IMR-90 (cell line): ENCODE measurements at regions of chr3 and their contacts with region 1.

Region 1: GRCh38 chr3:30613133-30613825 is 6.9 kb downstream of the TGFBR2 start:
- DNase-seq: no peak
- ATAC-seq: no peak
- H3K4me3 ChIP-seq: no peak overlapping the region
- H3K27ac ChIP-seq: no peak overlapping the region
- H3K4me1 ChIP-seq: peaks cover 22% of the 10 kb centered on the region
- H3K27me3 ChIP-seq: no peaks in the 10 kb centered on the region
- CTCF ChIP-seq: no peak
- POLR2A ChIP-seq: no peak
- RAD21 ChIP-seq: no peak

Region 2: GRCh38 chr3:30567139-30567753 is 46.0 kb before region 1 on chr3:
- CTCF ChIA-PET with region 1: no interaction called
- POLR2A ChIA-PET with region 1: no interaction called
- dilution Hi-C with region 1: no loop called
- in situ Hi-C with region 1: no loop called
- intact Hi-C with region 1: no loop called
- DNase-seq: no peak
- ATAC-seq: no peak
- H3K4me3 ChIP-seq: no peak overlapping the region
- H3K27ac ChIP-seq: no peak overlapping the region
- H3K4me1 ChIP-seq: no peaks in the 10 kb centered on the region
- H3K27me3 ChIP-seq: no peaks in the 10 kb centered on the region
- CTCF ChIP-seq: no peak
- POLR2A ChIP-seq: no peak
- RAD21 ChIP-seq: no peak

Region 3: GRCh38 chr3:30658328-30659052 is 45.2 kb after region 1 on chr3:
- CTCF ChIA-PET with region 1: interaction called, 10 read pairs
- POLR2A ChIA-PET with region 1: no interaction called
- dilution Hi-C with region 1: no loop called
- in situ Hi-C with region 1: no loop called
- intact Hi-C with region 1: no loop called
- DNase-seq: peak; percentile 79
- ATAC-seq: peak; percentile 45
- H3K4me3 ChIP-seq: peak overlapping the region; percentile 11; the same call in 1 of the 2 replicates
- H3K27ac ChIP-seq: peak overlapping the region; percentile 93
- H3K4me1 ChIP-seq: peaks cover 29% of the 10 kb centered on the region
- H3K27me3 ChIP-seq: no peaks in the 10 kb centered on the region
- CTCF ChIP-seq: no peak
- POLR2A ChIP-seq: no peak
- RAD21 ChIP-seq: no peak

Region 4: DNA sequence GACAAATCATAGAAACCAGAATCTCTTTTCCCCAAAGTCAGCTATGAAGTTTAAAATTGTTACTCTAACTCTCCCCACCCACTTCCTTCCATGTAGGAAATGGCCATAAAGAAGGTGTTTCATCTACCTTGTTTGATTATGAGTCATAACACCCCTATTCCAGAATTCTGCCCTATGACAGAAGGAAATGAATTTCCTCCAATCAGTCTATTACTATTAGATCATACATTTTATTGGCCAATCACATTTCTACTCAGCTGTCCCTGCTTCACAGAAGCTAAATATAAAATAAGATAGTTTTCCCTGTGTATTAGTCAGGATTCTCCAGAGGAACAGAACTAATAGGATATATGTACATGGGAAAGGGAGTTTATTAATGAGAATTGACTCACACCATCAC is 95.2 kb after region 1 on chr3:
- CTCF ChIA-PET with region 1: no interaction called
- POLR2A ChIA-PET with region 1: interaction called, 10 read pairs
- dilution Hi-C with region 1: no loop called
- in situ Hi-C with region 1: no loop called
- intact Hi-C with region 1: no loop called
- DNase-seq: no peak
- ATAC-seq: no peak
- H3K4me3 ChIP-seq: no peak overlapping the region
- H3K27ac ChIP-seq: no peak overlapping the region
- H3K4me1 ChIP-seq: no peaks in the 10 kb centered on the region
- H3K27me3 ChIP-seq: no peaks in the 10 kb centered on the region
- CTCF ChIP-seq: no peak
- POLR2A ChIP-seq: no peak
- RAD21 ChIP-seq: no peak